ENCODE measurements at regions of chr2 and their contacts with region 1.

Region 1: DNA sequence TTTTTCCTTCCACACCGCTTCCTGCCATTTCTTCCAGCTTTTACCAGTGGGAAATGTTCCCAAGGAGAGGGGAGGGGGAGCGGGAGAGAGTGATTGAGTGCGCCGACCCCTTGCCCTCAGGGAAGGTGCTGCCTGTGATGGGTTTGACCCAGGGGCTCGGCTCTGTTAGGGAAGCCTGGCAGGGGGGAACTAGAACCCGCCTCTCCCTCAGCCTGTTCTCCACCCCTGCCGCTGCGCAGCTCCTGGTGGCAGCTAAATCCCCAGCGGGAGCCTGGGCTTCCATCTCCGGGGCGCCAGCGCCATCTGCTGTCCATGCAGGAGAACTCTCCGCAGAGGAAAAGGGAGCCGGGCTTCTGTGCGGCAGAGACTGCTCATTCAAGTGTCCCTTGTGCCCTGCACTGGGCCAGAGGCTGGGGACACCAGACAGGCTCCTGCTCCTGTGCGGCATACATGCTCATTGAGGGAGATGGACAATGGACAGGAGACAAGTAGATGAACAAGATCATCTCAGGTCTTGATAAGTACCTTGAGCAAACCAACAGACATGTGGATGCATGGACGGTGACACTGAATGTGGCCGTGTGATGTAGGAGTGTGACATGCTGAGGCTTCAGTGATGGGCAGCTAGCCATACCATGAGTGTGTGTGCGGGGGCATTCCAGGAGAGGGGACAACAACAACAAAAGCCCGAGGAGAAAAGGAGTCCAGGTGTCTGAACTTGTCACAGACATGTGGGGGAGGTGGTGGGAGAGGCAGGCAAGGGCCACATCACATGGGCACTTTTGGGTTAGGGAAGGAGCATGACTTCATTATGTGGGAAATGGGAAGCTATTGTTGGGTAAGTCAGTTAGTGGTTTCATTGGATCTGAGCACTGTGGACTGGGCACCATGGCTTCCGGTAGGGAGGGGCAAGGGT is 13.3 kb downstream of the CHPF start:
- DNase-seq: peak; percentile 94
- CTCF ChIP-seq: peak; percentile 87

Region 2: DNA sequence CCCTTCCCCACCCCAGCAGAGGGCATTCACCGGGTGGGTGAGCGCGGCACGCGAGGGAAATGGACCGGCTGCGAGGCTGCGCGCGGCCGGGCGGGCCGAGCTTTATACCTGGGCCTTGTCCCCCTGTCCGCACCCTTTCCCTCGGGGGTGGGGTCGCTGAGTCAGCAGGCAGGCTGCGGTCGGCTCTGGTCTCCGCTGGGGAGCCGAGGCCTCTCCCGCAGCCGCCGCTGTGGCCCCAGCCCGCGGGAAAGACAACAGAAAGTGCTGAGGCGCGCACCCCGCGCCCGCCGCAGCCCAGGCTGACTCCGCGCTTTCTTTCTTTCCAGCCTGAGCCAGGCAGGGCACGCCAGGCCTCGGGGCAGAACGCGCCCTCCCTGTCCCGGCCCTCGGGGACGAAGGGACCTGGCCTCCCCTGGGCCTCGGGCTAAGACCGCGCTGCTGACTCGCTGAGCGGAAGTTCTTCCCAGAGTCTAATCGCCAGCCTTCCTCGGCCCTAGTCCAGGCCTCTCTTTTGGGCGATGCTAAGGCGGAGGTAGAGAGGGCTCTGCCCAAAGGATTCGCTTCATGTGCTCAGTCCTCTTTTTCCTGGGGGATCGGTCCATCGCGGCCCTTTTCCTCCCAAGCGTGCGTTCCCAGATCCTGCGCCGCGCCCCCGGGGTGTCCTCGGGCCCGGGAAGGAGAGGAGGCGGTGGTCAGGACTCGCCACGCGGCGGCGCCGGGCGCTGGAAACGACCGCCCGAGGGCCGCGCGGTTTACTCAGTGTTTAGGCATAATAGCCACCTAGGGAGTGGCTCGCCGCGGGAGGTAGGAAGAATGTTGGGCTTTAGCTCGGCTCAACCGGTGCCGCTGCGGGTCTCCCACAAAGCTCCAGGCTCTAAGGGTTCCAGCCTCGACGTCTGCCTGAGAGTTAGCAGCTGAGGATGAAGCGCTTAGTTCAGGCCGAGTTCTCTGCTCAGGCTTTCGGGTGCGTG is 536.7 kb before region 1 on chr2 and contains the start of gene CRYBA2:
- in situ Hi-C with region 1: no loop called
- DNase-seq: no peak
- CTCF ChIP-seq: peak; percentile 0

Region 3: DNA sequence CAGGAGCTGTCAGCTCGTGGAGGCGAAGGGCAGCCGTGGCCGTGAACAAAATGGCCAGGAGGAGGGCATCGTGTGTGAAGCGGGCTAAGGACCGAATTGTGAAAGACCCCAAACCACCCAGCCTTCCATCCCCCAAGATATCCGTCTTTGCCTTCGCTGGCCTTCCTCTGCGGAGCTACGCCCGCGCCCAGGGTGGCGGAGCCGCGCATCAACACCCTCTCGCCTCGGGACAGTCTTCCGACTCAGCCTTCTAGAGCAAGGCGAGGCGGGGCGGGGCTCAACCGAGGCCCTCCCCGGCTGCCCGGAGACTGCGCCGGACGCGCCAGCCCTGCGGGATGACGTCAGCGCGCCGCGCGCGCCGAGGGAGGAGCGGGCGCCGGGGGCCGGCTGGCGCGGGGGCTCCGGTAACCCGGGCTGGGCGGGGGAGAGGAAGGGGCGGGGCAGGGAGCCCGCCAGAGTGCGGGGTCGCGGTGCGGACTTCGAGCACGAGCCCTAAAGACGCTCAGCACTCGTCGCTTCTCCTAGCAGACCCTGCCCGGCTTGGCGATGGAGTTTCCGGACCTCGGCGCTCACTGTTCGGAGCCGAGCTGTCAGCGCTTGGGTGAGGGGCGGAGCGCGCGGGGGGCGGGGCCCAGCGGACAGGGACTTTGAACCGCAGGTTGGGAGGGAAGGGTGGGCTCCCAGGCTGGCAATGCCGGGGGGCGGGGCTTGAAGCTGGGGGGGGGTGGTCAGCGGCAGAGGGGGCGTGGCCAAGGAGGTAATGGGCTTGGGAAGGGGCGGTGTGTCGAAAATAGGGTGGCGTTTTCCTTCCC is 323.7 kb before region 1 on chr2 and contains the start of gene ZFAND2B:
- in situ Hi-C with region 1: no loop called
- DNase-seq: peak; percentile 100
- CTCF ChIP-seq: no peak

Region 4: GRCh38 chr2:219402665-219403515 is 127.4 kb before region 1 on chr2:
- in situ Hi-C with region 1: loop called (anchors 5 kb)
- DNase-seq: peak; percentile 81
- CTCF ChIP-seq: peak; percentile 79

Region 5: DNA sequence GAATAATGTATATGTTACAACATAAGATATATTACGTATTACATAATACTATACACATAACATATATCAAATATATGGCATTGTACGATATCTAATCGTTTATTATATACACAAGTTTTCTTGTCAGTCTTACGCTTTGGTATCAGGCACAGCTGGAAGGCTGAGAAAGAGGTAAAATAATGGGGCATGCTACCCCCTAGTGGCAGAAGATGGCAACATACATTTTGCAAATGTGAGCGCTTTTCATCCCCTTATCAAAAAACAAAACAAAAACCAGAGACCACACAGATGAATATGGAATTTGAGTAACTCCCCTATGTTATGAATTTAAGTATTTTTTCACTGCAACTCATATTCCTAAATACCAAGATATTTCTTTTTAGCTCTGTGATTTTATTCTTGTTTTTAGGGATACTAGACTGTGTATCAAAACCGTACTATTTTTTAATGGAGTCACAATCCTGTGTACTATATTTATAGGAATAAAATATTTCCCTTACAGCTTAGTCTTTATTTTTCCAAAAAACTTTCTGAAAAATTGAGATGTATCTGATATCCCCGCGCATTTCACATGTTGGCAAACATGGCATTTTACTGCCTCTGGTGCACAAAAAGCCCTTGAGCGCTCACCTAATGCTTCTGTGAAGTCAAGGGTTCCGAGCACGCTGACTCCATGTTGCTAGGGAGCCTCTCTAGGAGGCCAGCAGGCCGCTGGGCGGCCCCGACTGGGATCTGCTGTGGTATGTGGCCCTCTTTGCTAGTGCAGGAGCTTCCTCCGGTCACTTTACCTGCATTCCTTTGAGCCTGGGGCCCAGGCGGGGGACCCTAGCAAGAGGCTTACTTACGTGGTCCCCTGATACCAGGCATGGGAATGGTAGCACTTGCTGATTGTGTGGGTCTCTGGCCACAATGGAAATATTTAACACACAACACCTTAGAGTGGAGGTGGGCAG is 159.6 kb after region 1 on chr2:
- in situ Hi-C with region 1: loop called (anchors 10 kb)
- DNase-seq: peak; percentile 73
- CTCF ChIP-seq: peak; percentile 73